GM10248 (cell line): ENCODE measurements at regions of chr10 and their contacts with region 1.

Region 1: DNA sequence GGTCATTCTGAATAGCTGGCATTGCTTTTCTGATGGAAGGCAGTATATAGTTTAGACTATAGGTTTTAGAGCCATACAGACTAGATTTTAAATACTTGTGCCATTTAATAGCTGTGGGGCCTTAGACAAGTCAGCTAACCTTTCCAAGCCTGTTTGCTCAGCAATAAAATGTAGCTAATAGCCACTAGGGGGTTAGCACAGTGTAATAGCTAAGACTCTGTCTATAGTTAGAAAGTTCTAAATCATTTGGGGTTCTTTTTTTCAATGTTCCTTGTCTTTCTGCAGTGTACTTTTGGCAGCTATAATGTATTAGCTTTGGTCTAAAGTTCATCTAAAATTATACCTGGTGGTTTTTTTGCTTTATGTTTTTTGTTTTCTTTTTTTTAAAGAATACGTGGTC is 7.5 kb upstream of the KIFBP start:
- DNase-seq: no peak
- CTCF ChIP-seq: peak; percentile 13

Region 2: GRCh38 chr10:68963151-68963550 is 17.9 kb before region 1 on chr10:
- CTCF ChIA-PET with region 1: interaction called, 41 read pairs
- POLR2A ChIA-PET with region 1: no interaction called
- DNase-seq: no peak
- CTCF ChIP-seq: no peak